Ascending aorta (tissue), 2 donors: ENCODE measurements at regions of chr6 and their contacts with region 1.

Region 1: DNA sequence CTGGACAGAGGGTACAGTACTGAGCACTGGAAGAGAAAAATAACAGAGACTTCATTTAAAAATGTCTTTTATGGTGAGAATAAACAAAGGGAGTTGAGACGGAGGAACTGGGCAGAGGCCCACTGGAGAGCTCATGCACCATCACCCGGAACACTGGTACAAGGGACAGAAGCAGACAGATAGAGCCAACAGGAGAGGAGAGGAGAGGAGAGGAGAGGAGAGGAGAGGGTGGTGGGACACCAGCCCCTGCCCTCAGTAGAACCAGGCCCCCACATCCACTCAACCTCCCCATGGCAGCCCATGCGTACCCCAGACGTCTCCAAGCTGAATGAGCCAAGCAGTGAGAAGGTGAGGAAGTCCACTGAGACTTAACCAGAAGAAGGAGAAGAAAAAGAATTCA is 390.5 kb upstream of the CNR1 start:
- DNase-seq: no peak
- H3K4me3 ChIP-seq: no peak overlapping the region
- H3K27ac ChIP-seq: peak overlapping the region in 1 of 2 donors; percentile 24
- H3K4me1 ChIP-seq: peaks cover 0 to 18% of the 10 kb centered on the region in 2 donors
- H3K27me3 ChIP-seq: no peaks in the 10 kb centered on the region
- CTCF ChIP-seq: no peak

Region 2: DNA sequence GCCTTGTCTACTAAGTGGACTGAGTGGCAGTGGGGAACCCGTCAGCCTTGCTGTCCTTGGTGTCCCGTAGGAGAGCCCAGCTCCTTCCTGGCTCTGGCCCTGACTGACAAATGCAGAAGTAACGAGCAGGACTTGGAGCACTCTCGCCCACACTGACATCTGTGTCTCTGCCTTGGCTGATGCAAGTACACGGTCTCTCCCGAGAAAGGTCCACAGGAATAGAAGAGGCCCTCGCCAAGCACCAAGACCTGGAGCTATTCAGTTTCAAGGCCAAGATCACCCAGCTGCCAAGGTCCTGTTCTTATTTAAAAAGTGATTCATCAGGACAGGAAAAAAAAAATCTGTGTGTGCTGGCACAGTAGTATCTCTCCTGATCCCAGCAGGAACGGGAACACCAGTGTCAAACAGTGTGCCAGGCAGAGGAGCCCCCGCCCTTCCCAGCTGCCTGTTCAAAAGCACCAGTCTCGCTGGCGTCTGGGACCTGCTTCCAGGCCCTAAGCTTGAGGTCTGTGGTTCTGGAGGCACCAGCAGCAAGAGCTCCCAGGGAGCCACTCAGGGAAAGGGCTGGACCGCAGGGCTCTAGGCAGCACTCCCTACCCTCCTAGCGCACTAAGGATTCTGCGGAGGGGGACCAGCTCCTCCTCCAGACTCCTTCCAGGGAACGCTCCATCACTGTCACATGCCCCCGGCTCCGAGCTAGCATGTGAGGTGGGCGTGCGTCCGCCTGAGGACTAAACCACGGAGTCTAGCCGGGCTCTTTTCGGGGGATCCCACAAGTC is 29.9 kb after region 1 on chr6:
- intact Hi-C with region 1: loop called (anchors 2 kb)
- DNase-seq: peak; percentile 29 to 88
- H3K4me3 ChIP-seq: peak overlapping the region in 1 of 2 donors; percentile 50
- H3K27ac ChIP-seq: peak overlapping the region; percentile 64 to 76
- H3K4me1 ChIP-seq: peaks cover 8 to 10% of the 10 kb centered on the region in 2 donors
- H3K27me3 ChIP-seq: no peaks in the 10 kb centered on the region
- CTCF ChIP-seq: no peak

Region 3: GRCh38 chr6:88843040-88843439 is 286.4 kb after region 1 on chr6:
- intact Hi-C with region 1: no loop called
- DNase-seq: no peak
- H3K4me3 ChIP-seq: no peak overlapping the region
- H3K27ac ChIP-seq: peak overlapping the region; percentile 65 to 77
- H3K4me1 ChIP-seq: peaks cover 0 to 12% of the 10 kb centered on the region in 2 donors
- H3K27me3 ChIP-seq: no peaks in the 10 kb centered on the region
- CTCF ChIP-seq: no peak